ENCODE measurements at regions of chr12 and their contacts with region 1.

Region 1: DNA sequence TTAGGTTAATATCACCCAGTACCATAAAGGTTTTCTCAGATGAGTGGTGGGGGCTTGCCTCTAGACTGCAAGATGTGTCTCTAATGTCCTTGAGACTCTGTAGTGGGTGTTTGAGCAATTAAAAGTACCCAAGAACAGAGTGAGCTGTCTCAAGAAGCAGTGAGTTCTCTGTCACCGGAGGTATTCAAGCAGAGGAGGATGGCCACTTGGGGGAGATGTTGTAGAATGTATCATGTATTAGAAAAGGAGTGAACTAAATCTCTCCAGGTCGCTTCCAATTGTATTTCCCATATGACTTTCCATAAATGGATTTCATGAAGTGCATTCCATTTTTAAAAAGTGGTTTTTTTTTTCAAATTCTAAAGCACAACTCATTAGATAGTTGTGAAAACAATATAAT is 35.0 kb downstream of the SLC17A8 start:
- DNase-seq: peak in 1 of 2 donors; percentile 49
- ATAC-seq: peak; percentile 69

Region 2: GRCh38 chr12:100497105-100497795 is 105.4 kb after region 1 on chr12:
- intact Hi-C with region 1: no loop called
- DNase-seq: no peak
- ATAC-seq: no peak

Region 3: GRCh38 chr12:100554608-100555077 is 162.8 kb after region 1 on chr12:
- intact Hi-C with region 1: loop called in 1 of 2 experiments (anchors 10 kb)
- DNase-seq: no peak
- ATAC-seq: peak; percentile 89